Right lobe of liver (tissue), 6 donors: ENCODE measurements at regions of chr17 and their contacts with region 1.

Region 1: DNA sequence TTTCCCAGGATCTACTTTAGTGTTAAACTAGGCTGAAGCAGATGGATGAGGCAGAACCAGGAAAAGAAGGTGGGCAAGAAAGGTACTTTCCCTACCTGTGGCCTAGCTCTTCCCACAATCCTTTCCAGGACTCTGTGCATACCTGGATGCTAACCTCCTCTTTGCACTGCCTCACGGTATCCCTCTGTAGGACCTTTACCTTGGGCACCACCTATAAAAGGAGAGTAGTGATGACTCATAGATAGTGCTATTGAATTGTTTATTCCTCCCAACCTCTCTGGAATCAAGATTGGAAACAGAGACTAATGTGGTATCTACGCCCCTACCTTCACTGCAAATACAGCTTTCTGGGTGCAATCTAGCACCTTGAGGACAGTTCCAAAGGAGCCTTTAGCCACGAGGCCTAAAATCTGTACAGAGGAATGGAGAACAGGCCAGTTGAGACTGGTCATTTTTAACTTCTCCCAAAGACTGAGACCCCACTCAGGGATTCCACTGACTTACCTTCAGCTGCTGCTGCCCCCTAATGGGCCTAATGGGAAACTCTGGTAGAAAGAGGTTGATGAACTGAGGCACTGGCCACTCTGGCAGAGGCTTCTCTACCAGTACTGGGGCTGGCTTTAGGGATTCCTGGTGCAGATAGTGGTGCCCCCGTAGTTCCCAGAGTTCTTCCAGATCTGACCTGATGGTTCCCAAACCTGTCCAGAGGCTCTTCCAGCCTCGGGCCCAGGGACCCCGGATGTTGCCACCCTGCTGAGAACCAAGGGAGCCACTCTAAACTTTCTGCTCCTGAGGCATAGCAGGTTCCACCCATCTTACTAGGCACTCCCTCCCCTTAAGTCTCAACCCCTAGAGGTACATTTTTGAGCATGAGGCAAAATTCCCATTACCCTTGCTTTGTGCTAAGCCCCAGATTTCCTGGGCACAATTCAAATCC is 781 bp downstream of the RSKR start:
- DNase-seq: no peak
- ATAC-seq: peak; percentile 63 to 70 (median 66)
- H3K4me3 ChIP-seq: no peak overlapping the region
- H3K27ac ChIP-seq: no peak overlapping the region
- H3K4me1 ChIP-seq: peaks cover 0 to 5% (median 0%) of the 10 kb centered on the region in 4 donors
- H3K27me3 ChIP-seq: no peaks in the 10 kb centered on the region
- CTCF ChIP-seq: peak; percentile 58 to 71 (median 64)
- POLR2A ChIP-seq: no peak

Region 2: DNA sequence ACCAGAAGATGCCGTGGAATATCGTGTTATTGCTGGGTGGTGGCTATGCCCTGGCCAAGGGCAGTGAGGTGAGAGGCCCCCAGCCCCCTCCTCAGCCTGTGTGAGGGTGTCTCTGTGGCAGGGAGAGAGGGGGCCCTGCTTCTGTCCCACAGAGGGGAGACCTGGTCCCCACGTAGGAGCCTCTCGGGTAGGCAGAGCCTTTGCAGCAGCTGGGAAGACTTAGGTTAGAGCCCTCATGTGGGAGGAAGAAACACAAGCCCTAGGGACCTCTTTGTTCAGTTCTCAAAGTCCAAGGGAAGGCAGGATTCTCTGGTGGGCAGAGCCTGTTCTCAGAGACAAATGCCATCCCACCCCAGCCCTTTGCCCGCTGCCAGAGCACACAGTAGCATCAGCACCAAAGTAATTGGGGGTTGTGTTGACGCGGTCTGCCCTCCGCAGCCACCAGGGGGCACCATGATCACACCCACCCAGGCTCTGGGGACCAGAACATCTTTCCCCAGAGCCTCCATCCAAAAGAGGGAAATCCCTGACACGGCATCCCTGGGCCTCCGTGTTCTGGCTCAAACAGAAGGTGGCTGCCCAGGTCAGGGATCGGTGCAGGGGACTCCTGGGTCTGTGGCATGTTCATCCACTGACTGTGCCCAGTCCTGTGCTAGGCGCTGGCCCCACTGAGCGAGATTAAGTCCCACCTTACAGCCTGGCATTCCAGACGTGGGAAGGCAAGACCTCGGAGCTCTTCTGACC is 118.6 kb before region 1 on chr17:
- intact Hi-C with region 1: loop called in 1 of 2 experiments (anchors 5 kb)
- DNase-seq: peak; percentile 78 to 79 (median 78)
- ATAC-seq: peak; percentile 79 to 95 (median 90)
- H3K4me3 ChIP-seq: no peak overlapping the region
- H3K27ac ChIP-seq: no peak overlapping the region
- H3K4me1 ChIP-seq: no peaks in the 10 kb centered on the region
- H3K27me3 ChIP-seq: no peaks in the 10 kb centered on the region
- CTCF ChIP-seq: peak; percentile 84 to 89 (median 86)
- POLR2A ChIP-seq: no peak

Region 3: DNA sequence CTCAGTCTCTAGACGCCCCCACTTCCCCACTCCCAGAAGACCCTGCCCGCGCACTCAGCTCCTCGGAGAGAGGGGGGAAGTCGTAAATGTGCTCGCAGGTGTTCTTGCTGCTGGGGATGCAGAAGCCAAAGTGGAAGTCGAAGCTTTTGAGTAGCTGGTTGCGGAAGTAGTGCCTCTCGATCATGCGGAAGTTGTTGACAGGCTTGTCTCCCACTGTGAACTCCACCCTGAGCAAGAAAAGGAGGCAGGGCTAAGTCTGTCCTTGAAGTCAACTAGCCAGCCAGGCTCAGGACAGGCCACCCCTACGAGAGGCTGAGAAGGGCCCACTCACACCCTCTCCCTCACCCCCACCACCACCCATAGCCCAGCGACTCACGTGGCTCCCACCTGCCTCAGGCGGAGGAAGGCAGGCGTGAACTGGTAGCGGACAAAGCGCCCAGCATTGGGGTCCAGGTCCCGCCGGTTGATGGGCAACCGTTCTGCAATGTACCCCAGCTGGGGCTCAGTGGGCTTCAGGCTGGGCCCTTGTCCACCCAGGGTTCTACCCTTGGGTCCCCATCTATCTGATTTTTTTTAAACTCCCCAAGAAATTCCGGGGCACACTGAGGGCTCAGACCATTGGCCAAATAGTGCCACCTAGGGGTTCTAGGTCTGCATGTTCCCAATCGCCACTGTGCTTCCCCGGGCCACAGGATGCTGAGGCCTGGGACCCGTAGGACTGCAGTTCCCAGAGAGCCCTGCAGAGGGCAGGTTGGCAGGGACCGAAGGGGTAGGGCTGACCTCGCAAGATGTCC is 65.4 kb before region 1 on chr17:
- intact Hi-C with region 1: loop called (anchors 5 kb)
- DNase-seq: peak; percentile 79 to 86 (median 83)
- ATAC-seq: peak; percentile 74 to 78 (median 76)
- H3K4me3 ChIP-seq: no peak overlapping the region
- H3K27ac ChIP-seq: peak overlapping the region in 1 of 3 donors; percentile 29
- H3K4me1 ChIP-seq: peaks cover 0 to 3% (median 1%) of the 10 kb centered on the region in 4 donors
- H3K27me3 ChIP-seq: no peaks in the 10 kb centered on the region
- CTCF ChIP-seq: peak; percentile 91 to 96 (median 94)
- POLR2A ChIP-seq: no peak